Activated CD8-positive, alpha-beta T cell treated with anti-CD3 and anti-CD28 coated beads, Interleukin-2, amount 10 ng/mL, durations not matched to agents 7 days and 5 days (primary cell): ENCODE measurements at regions of chr17 and their contacts with region 1.

Region 1: DNA sequence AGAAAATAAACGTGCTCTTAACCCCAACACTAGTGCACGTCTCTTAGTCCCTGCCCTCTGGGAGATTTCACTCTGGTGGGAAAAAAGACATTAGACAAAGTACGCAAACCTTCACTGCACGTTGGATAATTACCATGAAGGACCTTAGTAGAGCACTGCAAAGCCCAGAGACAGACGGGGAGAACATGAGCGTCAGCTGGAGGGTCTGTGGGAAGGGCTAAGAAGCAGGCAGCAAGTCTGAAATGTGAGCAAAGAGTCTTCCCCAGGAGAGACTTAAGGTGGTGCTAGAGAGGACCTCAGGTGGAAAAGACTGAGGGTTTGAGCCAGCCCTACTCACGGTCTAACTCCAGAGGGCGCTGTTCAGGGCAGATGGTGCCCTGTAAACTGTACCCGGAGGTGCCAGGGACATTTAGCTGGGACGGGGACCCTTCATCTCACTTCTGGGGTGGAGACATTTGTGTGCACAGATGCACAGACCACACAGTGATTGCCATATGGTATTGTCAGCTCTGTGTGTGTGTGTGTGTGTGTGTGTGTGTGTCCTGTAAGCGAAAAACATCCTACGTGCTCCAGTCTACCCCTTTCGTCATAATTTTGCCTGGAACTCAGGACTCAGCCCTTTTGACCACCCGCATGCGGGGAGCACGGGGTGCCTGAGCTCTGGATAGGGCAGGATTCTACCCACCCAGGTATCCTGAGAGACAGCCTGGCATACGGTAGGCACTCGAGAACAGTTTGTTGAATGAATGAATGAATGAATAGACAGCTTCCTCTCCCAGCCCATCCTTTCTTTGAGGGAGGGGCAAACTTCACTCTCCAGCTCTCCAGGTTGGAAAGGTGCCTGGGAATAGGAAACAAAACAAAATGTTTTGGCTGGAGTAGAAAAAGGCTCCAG is 10.1 kb upstream of the STAC2 start:
- DNase-seq: peak; percentile 76
- ATAC-seq: peak; percentile 70
- H3K4me3 Mint-ChIP-seq: no peak overlapping the region
- H3K27ac Mint-ChIP-seq: no peak overlapping the region
- H3K4me1 Mint-ChIP-seq: peaks cover 33% of the 10 kb centered on the region
- H3K27me3 Mint-ChIP-seq: peaks cover 3% of the 10 kb centered on the region

Region 2: GRCh38 chr17:39199820-39200069 is 36.1 kb before region 1 on chr17:
- CTCF ChIA-PET with region 1: interaction called, 187 read pairs
- POLR2A ChIA-PET with region 1: interaction called, 13 read pairs
- DNase-seq: peak; percentile 94
- ATAC-seq: peak; percentile 57
- H3K4me3 Mint-ChIP-seq: peak overlapping the region; percentile 99
- H3K27ac Mint-ChIP-seq: peak overlapping the region; percentile 97
- H3K4me1 Mint-ChIP-seq: peaks cover 63% of the 10 kb centered on the region
- H3K27me3 Mint-ChIP-seq: no peaks in the 10 kb centered on the region

Region 3: GRCh38 chr17:39209317-39210092 is 26.3 kb before region 1 on chr17:
- CTCF ChIA-PET with region 1: interaction called, 187 read pairs
- POLR2A ChIA-PET with region 1: interaction called, 4 read pairs
- DNase-seq: peak; percentile 80
- ATAC-seq: peak; percentile 61
- H3K4me3 Mint-ChIP-seq: peak overlapping the region; percentile 50
- H3K27ac Mint-ChIP-seq: peak overlapping the region; percentile 61
- H3K4me1 Mint-ChIP-seq: peaks cover 32% of the 10 kb centered on the region
- H3K27me3 Mint-ChIP-seq: peaks cover 8% of the 10 kb centered on the region

Region 4: GRCh38 chr17:39219647-39220154 is 16.1 kb before region 1 on chr17:
- CTCF ChIA-PET with region 1: interaction called, 18 read pairs
- POLR2A ChIA-PET with region 1: interaction called, 3 read pairs
- DNase-seq: no peak
- ATAC-seq: no peak
- H3K4me3 Mint-ChIP-seq: no peak overlapping the region
- H3K27ac Mint-ChIP-seq: no peak overlapping the region
- H3K4me1 Mint-ChIP-seq: peaks cover under 1% of the 10 kb centered on the region
- H3K27me3 Mint-ChIP-seq: peaks cover 45% of the 10 kb centered on the region

Region 5: GRCh38 chr17:39306509-39307212 is 70.9 kb after region 1 on chr17:
- CTCF ChIA-PET with region 1: no interaction called
- POLR2A ChIA-PET with region 1: no interaction called
- DNase-seq: no peak
- ATAC-seq: no peak
- H3K4me3 Mint-ChIP-seq: no peak overlapping the region
- H3K27ac Mint-ChIP-seq: no peak overlapping the region
- H3K4me1 Mint-ChIP-seq: no peaks in the 10 kb centered on the region
- H3K27me3 Mint-ChIP-seq: no peaks in the 10 kb centered on the region